AG04450 (cell line): ENCODE measurements at regions of chr9 and their contacts with region 1.

Region 1: DNA sequence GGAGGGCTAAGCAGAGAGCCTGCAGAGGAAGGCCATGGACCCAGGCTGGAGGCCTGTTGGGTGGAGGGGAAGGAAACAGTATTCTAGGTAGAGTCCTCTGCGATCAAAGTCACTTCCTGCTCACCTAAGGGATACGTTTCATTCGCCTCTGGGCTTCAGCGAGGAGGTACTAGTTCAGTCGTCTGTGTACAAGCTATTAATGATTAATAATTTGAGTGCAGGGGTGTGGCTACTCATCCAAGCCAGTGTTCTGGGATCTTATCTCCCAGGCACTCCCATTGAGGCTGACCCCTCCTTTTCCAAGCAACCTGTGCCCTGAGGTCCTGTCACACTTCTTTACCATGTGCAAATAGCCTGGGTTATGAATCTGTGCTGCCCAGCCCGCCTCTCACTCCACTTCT is 25.2 kb downstream of the RALGPS1 start:
- DNase-seq: no peak
- H3K4me3 ChIP-seq: no peak overlapping the region
- H3K27ac ChIP-seq: no peak overlapping the region
- H3K27me3 ChIP-seq: peaks cover 5% of the 10 kb centered on the region
- CTCF ChIP-seq: no peak

Region 2: DNA sequence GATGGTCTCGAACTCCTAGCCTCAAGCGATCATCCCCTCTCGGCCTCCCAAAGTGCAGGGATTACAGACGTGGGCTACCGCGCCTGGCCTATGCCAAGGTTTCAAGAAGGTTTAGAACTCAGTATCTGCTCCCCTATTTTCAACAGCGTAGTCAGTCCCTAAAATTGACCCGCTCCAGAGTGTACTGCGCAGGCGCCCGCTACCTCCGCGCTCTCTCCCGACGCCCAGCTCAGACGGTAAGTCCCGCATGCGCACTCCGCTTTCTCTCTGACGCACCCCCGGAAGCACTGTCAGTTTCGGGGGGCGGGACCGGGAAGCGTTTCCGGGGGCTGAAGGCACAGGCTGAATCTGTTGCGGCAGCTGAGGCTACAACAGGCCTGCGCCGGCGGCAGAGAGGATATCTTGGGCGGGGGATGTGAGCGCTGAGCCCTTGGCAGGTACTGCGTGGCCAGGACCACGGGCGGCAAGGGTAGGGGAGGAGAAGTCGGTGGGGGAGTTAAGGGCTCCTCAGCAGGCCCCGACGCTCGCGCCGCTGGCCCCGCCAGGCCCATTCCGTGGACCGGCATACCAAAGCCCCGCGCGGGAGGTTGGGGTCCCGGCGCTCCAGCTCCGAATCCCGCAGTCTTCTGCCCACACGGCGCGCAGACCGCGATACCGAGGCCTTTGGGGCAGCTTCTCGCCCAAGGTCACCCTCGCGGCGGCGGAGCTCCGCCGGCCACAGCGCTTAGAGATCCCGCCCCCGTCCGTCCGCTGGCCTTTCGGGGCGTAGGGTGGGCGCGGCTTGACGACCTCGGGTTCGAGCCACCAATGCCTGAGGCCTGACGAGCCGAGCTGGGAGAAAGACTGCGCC is 134.9 kb before region 1 on chr9 and contains the start of gene ZBTB43:
- CTCF ChIA-PET with region 1: no interaction called
- POLR2A ChIA-PET with region 1: no interaction called
- DNase-seq: peak; percentile 82
- H3K4me3 ChIP-seq: peak within 1 kb of the TSS; percentile 89
- H3K27ac ChIP-seq: peak within 1 kb of the TSS; percentile 77
- H3K27me3 ChIP-seq: no peaks in the 10 kb centered on the region
- CTCF ChIP-seq: no peak
- polyA plus RNA-seq, gene ZBTB43: 11.7 and 12.3 TPM in 2 replicates

Region 3: GRCh38 chr9:126965541-126966428 is 26.0 kb after region 1 on chr9:
- CTCF ChIA-PET with region 1: interaction called, 11 read pairs
- POLR2A ChIA-PET with region 1: no interaction called
- DNase-seq: peak; percentile 21
- H3K4me3 ChIP-seq: no peak overlapping the region
- H3K27ac ChIP-seq: no peak overlapping the region
- H3K27me3 ChIP-seq: no peaks in the 10 kb centered on the region
- CTCF ChIP-seq: peak; percentile 95

Region 4: DNA sequence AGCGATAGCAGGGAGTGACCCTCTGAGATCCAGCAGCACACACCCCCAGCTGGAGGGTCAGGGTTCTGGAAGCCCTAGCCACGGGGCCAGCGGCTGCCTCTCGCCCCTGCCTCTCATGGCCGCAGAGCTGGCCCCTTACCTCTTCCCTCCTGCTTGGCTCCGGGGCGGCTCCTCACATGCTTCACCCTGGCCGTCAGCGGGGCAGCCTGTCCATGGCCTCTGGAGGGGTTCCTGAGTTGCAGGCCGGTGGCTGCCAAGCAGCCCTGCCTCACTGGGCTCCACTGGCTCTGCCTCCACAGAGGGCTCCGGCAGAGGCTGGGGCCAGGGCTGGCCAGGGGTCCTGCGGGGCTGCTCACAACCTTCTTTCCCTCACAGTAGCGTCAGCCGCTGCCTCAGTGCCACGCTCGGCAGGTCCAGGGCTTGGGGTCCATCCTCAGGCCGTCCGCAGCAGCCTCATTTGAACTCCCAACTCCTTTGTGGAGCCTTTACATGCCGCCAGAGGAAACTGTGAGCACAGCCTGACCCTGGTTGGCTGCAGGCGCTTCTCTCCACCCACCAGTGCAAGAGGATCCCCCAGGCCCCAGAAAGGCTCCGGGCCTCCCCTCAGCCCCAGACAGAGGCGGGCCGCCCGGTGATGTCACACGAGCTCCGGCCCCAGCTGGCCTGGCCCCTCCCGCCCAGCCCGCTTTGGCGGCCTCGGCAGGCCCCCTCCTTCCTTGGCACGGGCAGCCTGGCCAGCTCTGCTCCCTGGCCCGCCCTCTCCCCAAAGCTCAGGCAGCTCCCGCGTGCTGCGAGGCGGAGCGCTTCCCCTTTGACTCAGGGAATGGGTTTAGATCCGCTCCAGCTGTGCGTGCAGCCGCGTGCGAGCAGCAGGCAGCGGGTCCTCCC is 182.6 kb after region 1 on chr9 and contains the start of gene ANGPTL2:
- CTCF ChIA-PET with region 1: interaction called, 11 read pairs
- POLR2A ChIA-PET with region 1: interaction called, 5 read pairs
- DNase-seq: peak; percentile 94
- H3K4me3 ChIP-seq: peak within 1 kb of the TSS; percentile 94
- H3K27ac ChIP-seq: peak within 1 kb of the TSS; percentile 91
- H3K27me3 ChIP-seq: no peaks in the 10 kb centered on the region
- CTCF ChIP-seq: peak; percentile 1; the same call in 1 of the 2 replicates
- polyA plus RNA-seq, gene ANGPTL2: 107 and 108 TPM in 2 replicates

Region 5: DNA sequence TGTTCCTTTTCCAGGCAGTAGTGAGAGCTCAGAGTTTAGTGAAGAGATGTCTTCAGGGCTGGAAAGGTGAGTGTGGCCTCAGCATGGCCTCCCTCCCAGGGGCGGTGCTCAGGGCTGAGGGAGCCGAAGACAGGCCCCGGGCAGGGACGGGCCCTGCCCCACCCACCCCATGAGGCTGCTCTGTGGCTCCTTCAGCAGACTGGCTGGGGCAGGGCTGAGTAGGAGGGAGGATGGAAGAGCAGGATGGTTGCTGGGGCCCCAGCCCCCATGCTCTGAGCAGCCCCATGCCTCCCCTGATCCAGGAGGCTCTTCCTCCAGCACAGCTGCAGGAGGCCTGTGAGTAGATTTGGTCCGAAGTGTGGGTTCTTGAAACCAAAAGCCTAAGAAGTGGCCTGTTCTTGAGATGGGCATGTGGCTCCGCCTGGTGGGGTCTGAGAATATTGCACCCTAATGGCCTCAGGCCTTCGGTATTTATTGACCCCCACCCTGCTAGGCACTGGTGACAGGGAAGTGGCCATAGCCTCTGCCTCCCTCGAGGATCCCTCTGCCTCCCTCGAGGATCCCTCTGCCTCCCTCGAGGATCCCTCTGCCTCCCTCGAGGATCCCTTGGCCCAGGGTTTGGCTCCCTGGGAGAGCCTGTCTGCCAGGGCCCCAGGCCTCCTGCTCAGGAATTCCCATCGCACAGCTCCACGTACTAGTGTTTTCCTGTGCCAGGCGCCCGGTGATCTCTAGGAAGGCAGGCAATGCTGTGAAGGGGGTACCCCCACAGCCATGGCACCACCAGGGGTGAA is 259.4 kb after region 1 on chr9:
- CTCF ChIA-PET with region 1: interaction called, 134 read pairs
- POLR2A ChIA-PET with region 1: no interaction called
- DNase-seq: peak; percentile 71
- H3K4me3 ChIP-seq: no peak overlapping the region
- H3K27ac ChIP-seq: no peak overlapping the region
- H3K27me3 ChIP-seq: peaks cover under 1% of the 10 kb centered on the region
- CTCF ChIP-seq: peak; percentile 92

Region 6: DNA sequence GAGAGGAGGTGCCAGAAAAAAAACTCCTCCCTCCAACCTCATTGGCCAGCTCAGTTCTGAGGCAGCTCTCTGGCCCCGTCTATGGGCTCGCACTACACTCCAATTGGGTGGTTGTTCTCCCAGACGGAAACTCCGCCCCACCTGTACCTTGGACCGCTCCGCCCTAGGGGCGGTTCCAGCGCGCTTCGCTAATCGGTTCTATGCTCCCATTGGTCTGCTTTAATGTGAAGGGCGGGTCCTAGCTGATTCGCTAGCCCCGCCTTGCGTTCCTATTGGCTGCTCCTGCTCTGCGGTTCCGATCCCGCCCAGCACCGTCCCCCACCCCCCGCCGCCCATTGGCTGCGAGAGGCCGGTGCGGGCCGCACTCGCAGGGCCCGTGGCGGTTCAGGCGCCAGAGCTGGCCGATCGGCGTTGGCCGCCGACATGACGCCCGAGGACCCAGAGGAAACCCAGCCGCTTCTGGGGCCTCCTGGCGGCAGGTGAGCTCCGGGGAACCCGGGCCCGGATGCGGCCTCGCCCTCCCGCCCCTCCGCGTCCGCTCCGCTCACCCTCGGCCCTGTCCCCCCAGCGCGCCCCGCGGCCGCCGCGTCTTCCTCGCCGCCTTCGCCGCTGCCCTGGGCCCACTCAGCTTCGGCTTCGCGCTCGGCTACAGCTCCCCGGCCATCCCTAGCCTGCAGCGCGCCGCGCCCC is 457.1 kb after region 1 on chr9 and contains the start of gene SLC2A8:
- CTCF ChIA-PET with region 1: interaction called, 10 read pairs
- POLR2A ChIA-PET with region 1: no interaction called
- DNase-seq: peak; percentile 99
- H3K4me3 ChIP-seq: peak within 1 kb of the TSS; percentile 66
- H3K27ac ChIP-seq: no peak within 1 kb of the TSS
- H3K27me3 ChIP-seq: peaks cover 15% of the 10 kb centered on the region
- CTCF ChIP-seq: no peak
- polyA plus RNA-seq, gene SLC2A8: 5.4 and 6.3 TPM in 2 replicates

Region 7: DNA sequence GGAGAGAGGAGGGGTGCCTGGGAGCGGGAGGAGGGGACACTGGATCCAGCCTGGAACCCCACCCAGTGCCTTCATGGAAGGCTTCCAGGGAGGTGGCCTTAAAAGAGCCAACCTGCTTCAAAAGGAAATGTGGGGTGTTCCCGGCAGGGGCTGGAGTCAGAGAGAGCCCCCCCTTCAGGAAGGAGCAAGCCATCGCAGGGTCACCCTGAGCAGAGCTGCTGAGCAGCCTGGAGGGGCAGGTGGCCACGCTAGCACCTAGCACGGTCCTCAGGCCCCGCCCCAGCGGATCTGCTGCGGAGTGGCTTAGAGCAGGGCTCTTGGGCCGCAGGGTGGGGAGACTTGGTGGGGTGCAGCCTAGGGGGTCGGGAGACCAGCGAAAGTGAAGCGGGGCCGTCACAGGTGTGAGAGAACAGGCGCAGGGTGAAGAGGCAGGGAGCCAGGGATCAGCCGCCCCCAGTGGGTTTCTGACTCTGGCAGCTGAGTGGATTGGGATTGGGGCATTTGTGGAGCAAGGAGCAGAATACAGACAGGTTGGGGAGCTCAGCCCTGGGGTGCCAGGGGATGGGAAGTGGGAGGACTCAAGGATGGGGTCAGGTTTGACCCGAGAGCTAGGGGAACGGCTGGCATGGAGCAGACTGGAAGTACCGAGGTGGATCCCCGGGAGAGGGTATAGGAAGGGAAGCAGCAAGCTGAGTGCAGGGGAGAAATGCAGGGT is 1210.9 kb after region 1 on chr9:
- CTCF ChIA-PET with region 1: no interaction called
- POLR2A ChIA-PET with region 1: no interaction called
- DNase-seq: no peak
- H3K4me3 ChIP-seq: no peak overlapping the region
- H3K27ac ChIP-seq: no peak overlapping the region
- H3K27me3 ChIP-seq: peaks cover 7% of the 10 kb centered on the region
- CTCF ChIP-seq: peak; percentile 25; the same call in 1 of the 2 replicates